Mammary epithelial cell (primary cell): ENCODE measurements at regions of chr2 and their contacts with region 1.

Region 1: DNA sequence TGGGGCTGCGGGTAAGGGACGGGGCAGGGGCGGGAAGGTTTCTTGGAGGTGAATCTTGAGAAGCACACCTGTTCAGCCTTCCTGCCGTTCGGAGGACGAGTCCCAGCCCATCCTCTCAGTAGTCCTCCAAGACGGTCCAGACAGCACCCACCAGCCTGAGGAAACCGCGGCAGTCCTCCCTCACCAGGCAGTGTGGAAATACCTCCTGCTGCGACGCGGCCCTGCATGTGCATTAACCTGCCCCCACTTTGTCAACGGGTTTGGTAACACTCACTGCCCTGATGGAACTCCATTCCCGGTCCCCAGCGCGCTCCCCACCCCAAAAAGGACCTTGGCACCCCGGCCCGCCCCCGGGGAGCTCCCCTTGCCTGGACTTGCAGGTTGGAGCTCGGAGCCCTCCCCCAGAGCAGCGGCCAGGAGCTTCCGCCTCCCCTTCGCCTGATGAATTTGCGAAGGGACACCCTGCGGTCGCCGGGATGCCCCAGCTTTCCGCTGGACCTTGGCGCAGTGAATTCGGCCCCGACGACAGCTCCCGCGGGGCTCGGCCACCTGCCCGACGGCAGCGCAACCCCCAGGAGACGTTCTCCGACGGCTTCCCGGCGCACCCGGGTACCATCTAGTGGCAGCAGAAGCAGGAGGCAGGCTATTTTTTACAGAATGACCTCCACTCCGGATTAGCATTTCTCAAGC is 31.5 kb downstream of the ACVR1C start:
- DNase-seq: peak; percentile 11
- H3K4me3 ChIP-seq: peak overlapping the region in 1 of 3 experiments; percentile 23
- H3K27ac ChIP-seq: no peak overlapping the region
- H3K4me1 ChIP-seq: no peaks in the 10 kb centered on the region
- H3K27me3 ChIP-seq: peaks cover 23% of the 10 kb centered on the region
- CTCF ChIP-seq: peak; percentile 29 to 65

Region 2: DNA sequence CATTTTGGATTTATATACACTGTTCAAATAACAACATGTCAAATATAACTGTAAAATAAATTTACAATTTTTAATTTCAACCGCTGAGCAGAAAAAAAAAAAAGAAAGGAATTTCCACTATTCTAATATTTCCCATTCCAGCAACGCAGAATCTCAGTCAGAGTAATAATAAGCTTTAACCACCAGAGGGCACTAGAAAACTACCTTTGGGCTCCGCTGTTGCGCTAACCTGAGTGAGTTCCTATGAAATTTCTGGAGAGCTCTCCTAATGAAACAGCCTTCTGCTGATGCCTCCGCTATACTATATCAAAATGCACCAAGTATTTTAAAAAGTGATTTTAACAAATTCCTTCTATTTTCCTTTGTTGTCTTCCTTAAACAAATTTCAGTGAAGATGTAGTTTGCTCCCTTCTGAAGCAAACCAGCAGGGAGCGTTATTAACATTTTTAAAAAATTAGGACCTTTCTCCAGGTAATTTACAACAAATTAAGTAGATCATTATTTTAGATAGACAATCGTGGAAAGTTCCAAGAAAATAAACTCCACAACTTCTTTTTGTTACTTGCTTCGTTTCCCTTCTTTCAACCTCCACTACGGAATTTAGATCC is 294.5 kb before region 1 on chr2:
- CTCF ChIA-PET with region 1: no interaction called
- dilution Hi-C with region 1: no loop called
- in situ Hi-C with region 1: no loop called
- intact Hi-C with region 1: loop called (anchors 10 kb)
- DNase-seq: peak; percentile 32
- H3K4me3 ChIP-seq: no peak overlapping the region
- H3K27ac ChIP-seq: no peak overlapping the region
- H3K4me1 ChIP-seq: no peaks in the 10 kb centered on the region
- H3K27me3 ChIP-seq: no peaks in the 10 kb centered on the region
- CTCF ChIP-seq: peak; percentile 69 to 74

Region 3: GRCh38 chr2:157492189-157492773 is 104.9 kb before region 1 on chr2:
- CTCF ChIA-PET with region 1: no interaction called
- dilution Hi-C with region 1: no loop called
- in situ Hi-C with region 1: no loop called
- intact Hi-C with region 1: loop called (anchors 2 kb)
- DNase-seq: peak; percentile 48
- H3K4me3 ChIP-seq: no peak overlapping the region
- H3K27ac ChIP-seq: no peak overlapping the region
- H3K4me1 ChIP-seq: no peaks in the 10 kb centered on the region
- H3K27me3 ChIP-seq: no peaks in the 10 kb centered on the region
- CTCF ChIP-seq: peak; percentile 78 to 82

Region 4: GRCh38 chr2:158315000-158315399 is 717.9 kb after region 1 on chr2:
- CTCF ChIA-PET with region 1: no interaction called
- dilution Hi-C with region 1: no loop called
- in situ Hi-C with region 1: no loop called
- intact Hi-C with region 1: no loop called
- DNase-seq: no peak
- H3K4me3 ChIP-seq: no peak overlapping the region
- H3K27ac ChIP-seq: no peak overlapping the region
- H3K4me1 ChIP-seq: no peaks in the 10 kb centered on the region
- H3K27me3 ChIP-seq: no peaks in the 10 kb centered on the region
- CTCF ChIP-seq: no peak